ENCODE measurements at regions of chr2 and their contacts with region 1.

Region 1: DNA sequence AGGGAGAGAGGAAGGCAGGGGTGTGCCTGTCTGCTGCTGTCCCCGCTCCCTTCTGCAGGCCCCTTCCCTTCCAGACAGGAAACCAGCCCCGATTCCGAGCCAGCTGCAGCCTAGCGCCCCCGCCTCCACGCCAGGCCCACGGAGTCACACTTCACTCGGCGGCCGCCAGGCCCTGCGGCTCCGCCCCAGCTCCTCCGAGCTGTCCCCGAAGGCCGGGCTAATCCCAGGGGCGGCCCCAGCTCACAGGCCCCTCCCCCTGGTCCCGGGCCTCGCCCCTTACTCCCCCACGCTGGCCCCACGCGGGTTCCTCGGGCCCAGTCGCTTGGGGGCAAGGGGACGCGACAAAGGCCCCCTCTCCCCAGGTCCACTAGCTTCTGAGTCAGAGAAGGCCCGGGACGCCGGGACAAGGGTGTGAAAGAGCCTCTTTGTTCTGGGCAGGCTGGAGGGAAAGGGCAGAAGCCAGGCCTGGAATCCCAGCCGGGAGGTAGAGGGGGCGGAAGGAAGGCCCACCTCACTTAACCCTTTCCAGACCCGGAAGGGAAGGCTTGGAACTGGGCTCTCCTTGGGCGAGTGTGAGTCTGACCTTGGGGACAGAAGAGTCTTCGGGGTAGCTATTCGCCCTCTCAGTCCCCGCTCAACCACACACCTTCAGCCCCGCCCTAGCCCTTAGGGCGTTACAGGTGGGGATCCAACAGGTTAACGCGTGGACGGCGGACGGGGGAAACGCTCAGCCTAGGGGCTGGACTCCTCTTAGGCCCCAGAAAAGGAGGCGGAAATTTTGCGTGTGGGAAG is 1.2 kb downstream of the RTKN start:
- DNase-seq: no peak
- H3K4me3 ChIP-seq: peak overlapping the region; percentile 71
- CTCF ChIP-seq: peak; percentile 49

Region 2: DNA sequence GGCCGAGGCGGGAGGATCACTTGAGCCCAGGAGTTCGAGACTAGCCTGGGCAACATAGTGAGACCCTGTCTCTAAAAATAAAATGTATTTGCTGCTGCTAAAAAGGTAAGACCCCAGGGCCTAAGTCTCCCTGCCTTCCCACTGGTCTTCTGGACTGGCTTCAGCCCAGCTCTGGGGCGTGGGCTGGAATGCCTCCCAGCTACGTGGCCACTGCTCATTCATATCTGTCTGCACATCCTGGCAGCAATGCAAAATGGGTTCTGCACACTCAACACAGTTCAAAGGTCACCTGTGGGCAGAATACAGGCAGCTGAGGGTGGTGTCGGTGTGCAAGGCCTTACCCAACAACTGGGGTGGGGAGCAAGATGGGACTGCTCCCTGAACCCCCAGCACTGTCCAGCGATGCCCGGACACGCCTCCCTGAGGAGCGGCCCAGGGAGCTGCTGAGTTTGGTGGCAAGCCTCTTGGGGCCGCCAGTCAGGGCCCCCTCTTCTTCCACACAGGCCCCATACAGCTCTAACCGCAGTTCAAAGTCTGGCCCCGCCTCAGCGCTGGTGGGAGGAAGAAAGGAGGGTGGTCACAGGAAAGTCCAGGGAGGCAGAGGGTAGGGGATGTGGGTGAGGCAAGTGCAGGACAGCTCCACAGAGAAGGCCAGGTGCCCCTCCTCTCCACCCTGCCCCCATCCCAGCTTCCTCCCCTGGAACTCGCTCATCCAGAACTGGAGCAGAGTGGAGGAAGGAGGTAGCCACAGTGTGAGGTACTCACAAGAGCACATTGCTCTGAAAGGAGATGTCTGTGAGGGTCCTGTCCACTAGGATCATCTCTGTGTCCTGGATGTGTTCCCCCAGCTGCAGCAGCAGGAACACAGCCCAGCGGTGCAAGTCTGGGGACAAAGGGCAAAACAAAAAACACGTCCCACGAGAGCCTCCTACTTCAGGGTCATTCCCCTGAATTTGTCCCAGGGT is 10.8 kb before region 1 on chr2:
- CTCF ChIA-PET with region 1: interaction called, 16 read pairs
- POLR2A ChIA-PET with region 1: interaction called, 3 read pairs
- DNase-seq: no peak
- H3K4me3 ChIP-seq: no peak overlapping the region
- CTCF ChIP-seq: no peak

Measured in AG04449 (cell line).